ENCODE measurements at regions of chr2 and their contacts with region 1.

Region 1: DNA sequence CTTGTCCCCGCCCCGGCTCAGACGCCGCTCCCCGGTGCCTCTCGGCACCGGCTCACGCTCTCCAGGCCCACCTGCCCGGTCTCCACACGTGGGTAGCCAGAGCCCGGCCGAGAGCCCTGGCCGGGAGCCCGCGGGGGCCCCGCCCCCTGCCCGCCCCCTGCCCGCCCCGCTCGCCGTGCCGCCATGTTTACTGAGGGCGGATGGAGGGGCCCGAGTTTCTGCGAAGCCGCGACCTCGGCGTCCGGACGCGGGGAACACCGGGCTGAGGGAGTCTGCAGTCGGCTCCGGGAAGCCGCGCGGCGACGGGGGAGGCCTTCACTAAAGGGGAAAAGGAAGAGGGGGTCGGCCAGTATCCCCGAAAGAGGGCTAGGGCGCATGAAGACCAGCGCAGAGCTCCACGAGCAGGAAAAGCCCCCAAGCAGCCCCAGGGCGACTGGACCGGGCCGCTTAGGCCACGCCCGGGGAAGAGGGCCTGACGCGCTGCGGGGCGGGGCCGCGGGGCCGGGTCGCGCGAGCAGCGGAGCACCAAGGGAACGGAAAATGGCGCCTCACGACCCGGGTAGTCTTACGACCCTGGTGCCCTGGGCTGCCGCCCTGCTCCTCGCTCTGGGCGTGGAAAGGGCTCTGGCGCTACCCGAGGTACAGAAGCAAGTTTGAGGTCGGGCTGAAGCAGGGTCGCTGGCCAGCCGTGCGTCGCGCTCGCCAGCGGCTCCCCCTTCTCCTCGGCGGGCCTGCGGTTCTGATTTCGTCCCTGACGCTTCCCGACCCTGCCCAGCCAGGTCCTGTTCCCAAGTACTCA is at the starts of genes ATRAID and SLC5A6:
- DNase-seq: peak; percentile 35 to 93
- H3K4me3 ChIP-seq: peak within 1 kb of the TSS; percentile 72 to 77
- H3K27ac ChIP-seq: peak within 1 kb of the TSS; percentile 94 to 98
- H3K4me1 ChIP-seq: peaks cover 11 to 19% of the 10 kb centered on the region in 2 donors
- H3K27me3 ChIP-seq: no peaks in the 10 kb centered on the region
- CTCF ChIP-seq: no peak
- total RNA-seq, gene ATRAID: 284 TPM
- total RNA-seq, gene SLC5A6: 85.7 TPM

Region 2: DNA sequence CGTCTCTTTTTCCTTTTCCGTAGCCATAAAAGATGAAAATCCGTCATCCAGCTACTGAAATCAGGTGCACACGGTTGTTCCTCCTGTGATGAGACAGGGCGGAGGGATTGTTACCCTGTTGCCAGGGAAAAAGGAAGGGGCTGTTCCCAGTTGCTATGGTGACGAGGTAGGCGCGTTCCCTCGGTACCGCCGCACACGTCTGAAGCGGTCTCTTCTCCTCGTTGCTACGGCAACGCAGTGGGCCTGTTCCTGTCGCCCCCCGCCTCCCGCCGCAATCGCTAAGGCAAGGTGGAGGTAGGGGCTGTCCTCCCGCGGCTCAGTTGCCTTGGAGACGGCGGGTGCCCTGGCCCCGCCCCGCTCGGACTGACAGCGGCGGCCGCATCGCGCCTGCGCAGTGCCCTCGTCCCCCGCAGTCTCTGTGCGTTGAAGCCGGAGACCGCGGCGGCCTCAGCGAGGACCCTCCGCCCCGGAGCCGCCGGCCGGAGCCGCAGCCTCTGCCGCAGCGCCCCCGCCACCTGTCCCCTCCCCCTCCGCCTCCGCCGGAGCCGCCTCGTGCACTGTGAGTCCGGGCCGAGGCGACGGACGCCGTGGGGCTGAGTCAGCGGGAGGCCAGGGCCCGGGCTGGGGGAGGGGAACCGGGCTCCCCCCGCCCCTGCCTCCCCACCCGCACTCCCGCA is 241.6 kb before region 1 on chr2 and contains the start of gene MAPRE3:
- intact Hi-C with region 1: loop called (anchors 5 kb)
- DNase-seq: peak in 1 of 2 donors; percentile 87
- H3K4me3 ChIP-seq: peak within 1 kb of the TSS; percentile 76 to 80
- H3K27ac ChIP-seq: peak within 1 kb of the TSS; percentile 72 to 81
- H3K4me1 ChIP-seq: peaks cover 6% of the 10 kb centered on the region in 2 donors
- H3K27me3 ChIP-seq: no peaks in the 10 kb centered on the region
- CTCF ChIP-seq: no peak
- total RNA-seq, gene MAPRE3: 18.9 TPM

Region 3: GRCh38 chr2:27370026-27370815 is 158.2 kb after region 1 on chr2 and contains the starts of genes EIF2B4 and SNX17:
- intact Hi-C with region 1: no loop called
- DNase-seq: peak; percentile 97 to 100
- H3K4me3 ChIP-seq: peak within 1 kb of the TSS; percentile 70 to 84
- H3K27ac ChIP-seq: peak within 1 kb of the TSS; percentile 87 to 95
- H3K4me1 ChIP-seq: peaks cover 9 to 23% of the 10 kb centered on the region in 2 donors
- H3K27me3 ChIP-seq: no peaks in the 10 kb centered on the region
- CTCF ChIP-seq: peak; percentile 68 to 87 (median 83)
- total RNA-seq, gene EIF2B4: 34.8 TPM
- total RNA-seq, gene SNX17: 94.0 TPM